OCI-LY7 (cell line): ENCODE measurements at regions of chr3 and their contacts with region 1.

Region 1: DNA sequence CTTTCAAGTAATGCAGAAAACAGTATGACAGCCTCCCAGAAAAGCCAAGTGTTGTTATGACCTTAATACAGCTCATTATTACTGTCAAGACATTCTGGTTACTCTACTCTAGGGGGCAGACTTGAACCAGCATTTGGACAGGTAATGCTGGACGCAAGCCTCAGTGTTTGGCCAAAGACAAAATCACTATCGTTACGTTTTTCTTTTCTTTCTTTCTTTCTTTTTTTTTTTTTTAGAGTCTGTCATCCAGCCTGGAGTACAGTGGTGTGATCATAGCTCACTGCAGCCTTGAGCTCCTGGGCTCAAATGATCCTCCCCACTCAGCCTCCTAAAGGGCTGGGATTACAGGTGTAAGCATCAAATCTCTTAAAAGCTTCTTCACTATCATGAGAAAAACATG is 29.4 kb upstream of the TMEM45A start:
- DNase-seq: peak; percentile 49
- H3K4me3 ChIP-seq: no peak overlapping the region
- H3K27ac ChIP-seq: no peak overlapping the region
- H3K4me1 ChIP-seq: no peaks in the 10 kb centered on the region
- CTCF ChIP-seq: peak; percentile 80

Region 2: DNA sequence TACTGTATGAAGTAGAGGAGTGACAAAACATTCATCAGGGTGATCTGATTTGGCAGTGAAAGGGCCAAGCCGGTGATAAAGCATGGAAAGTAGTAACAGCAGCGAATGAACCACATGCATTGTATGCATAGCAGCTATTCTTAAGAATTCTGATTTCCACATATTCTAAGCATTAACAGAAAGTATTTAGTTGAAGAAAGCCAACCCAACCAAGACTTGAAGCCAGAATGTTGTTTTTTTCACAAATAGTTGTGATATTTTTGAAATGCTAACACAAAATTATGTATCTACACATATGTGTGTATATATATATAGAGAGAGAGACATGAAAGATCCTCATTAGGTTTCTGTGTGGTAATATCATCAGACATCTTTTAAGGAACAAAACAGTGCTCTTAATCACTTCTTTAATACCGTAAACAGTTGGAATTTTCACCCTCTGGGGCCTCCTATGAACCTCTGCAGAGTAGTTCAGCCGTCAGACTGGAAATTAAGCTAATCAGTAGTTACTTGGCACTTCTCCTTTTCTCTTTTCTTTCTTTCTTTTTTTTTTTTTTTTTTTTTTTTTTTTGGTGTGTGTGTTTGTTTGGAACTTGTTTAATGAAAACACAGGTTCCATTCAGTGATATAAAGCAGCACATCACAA is 505.7 kb before region 1 on chr3:
- CTCF ChIA-PET with region 1: no interaction called
- POLR2A ChIA-PET with region 1: interaction called, 10 read pairs
- intact Hi-C with region 1: no loop called
- DNase-seq: no peak
- H3K4me3 ChIP-seq: no peak overlapping the region
- H3K27ac ChIP-seq: no peak overlapping the region
- H3K4me1 ChIP-seq: no peaks in the 10 kb centered on the region
- CTCF ChIP-seq: no peak

Region 3: DNA sequence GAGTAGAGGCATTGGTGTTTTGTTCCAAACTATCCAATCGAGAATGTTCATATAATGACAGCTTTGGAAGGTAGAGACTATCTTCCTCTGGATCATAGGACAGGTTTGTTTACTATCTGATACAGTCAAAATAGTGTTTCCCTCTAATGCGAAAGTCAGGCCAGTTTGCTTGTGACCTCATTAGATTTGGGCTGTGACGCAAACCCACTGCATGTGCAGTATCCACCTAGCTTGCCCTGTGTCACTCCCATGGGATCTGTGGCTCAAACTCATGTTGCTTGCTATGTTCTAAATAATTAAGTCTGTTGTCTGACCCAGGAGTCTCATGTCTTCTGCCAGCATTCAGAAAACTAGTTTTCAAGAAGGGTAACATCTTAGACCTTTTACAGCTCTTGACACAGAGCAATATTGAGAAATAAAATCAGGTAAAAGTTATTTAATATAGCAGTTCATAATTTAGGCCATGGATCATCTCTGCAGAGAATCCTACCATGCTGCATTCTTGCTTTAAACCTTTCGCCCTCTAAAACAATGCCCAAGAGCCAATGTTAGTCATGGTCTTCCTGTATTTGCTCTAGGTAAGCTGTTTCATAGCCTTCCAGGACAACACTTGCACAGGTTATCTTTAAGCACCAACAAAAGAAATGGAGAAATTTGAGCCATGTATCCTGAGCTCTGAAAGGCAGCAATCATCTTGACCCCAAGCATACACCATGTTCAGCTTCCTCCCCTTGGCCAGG is 102.1 kb before region 1 on chr3:
- CTCF ChIA-PET with region 1: no interaction called
- POLR2A ChIA-PET with region 1: no interaction called
- intact Hi-C with region 1: no loop called
- DNase-seq: no peak
- H3K4me3 ChIP-seq: no peak overlapping the region
- H3K27ac ChIP-seq: no peak overlapping the region
- H3K4me1 ChIP-seq: no peaks in the 10 kb centered on the region
- CTCF ChIP-seq: no peak

Region 4: GRCh38 chr3:100506355-100506754 is 43.4 kb after region 1 on chr3:
- CTCF ChIA-PET with region 1: no interaction called
- POLR2A ChIA-PET with region 1: no interaction called
- intact Hi-C with region 1: no loop called
- DNase-seq: no peak
- H3K4me3 ChIP-seq: no peak overlapping the region
- H3K27ac ChIP-seq: no peak overlapping the region
- H3K4me1 ChIP-seq: no peaks in the 10 kb centered on the region
- CTCF ChIP-seq: no peak

Region 5: DNA sequence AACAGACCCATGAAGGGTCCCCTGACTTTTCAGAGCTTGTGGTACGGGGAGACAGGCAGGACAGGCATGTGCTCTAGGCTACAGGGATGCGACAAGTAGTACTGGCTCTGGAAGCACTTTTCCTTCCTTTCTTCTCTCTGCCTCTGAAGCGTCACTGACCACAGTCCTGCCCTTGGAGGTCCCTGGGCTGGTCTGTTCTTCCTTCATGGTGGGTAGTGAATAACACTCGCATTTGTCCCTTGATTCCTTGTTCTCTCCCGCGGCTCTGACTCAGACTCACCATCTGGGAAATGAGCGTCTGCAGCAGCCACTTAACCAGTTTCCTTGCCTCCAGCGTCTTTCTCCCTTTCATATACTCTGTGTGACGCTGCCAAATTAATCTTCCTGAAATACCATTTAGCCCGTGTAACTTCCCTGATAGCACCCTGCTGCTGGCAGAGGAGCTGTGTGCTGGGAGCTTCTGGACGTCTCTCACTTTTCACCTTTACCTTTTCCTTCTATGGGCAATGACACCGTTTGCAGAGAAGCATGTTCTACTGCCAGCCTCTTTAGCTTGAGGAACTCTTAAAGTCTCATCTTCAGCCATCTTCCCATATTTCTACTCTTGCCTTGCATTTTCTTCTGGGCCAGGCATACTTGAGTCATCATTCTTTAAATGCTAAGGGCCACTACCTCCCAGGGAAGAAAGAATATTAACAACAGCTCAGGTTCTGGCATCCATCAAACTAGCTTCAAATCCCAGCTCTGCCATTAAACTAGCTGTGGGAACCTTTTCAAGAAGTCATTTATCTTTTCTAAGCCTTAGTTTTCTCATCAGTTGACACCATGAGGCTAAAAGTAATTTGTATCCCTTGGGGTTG is 63.0 kb after region 1 on chr3:
- CTCF ChIA-PET with region 1: no interaction called
- POLR2A ChIA-PET with region 1: no interaction called
- intact Hi-C with region 1: no loop called
- DNase-seq: no peak
- H3K4me3 ChIP-seq: no peak overlapping the region
- H3K27ac ChIP-seq: no peak overlapping the region
- H3K4me1 ChIP-seq: no peaks in the 10 kb centered on the region
- CTCF ChIP-seq: no peak

Region 6: DNA sequence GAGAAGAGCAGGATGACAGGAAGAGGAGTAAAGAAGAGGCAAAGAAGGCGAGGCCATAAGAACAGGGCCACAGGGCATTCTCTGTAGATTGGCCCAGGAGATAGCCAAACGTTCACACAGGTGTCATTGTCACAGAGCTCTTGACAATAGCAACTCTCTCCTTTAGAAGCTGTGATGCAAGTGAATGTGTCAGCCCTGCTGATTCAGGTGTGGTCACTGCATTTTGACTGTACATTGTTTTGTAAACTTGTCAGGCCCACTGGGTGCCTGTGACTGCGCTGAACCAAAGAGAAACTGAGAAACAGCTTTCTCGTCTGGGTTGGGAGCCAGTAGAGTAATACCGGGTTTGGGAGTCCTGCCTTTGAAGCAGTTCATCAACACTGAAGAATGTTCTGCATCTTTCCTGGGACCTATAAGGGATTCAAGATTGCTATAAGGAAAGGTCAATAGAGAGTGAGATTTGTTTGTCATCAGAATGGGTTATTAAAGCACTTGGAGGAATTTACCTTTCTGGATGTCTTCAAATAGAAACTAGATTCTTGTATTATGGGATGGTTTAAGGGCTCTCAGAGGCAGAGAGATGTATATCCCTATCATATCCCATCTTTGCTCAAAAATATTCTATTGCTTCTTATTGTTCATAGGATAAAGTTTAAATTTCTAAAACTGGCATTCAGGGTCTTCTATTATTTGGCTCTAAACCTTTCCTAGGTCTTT is 74.8 kb after region 1 on chr3:
- CTCF ChIA-PET with region 1: no interaction called
- POLR2A ChIA-PET with region 1: no interaction called
- intact Hi-C with region 1: no loop called
- DNase-seq: no peak
- H3K4me3 ChIP-seq: no peak overlapping the region
- H3K27ac ChIP-seq: no peak overlapping the region
- H3K4me1 ChIP-seq: no peaks in the 10 kb centered on the region
- CTCF ChIP-seq: no peak

Region 7: GRCh38 chr3:100796556-100796955 is 333.6 kb after region 1 on chr3:
- CTCF ChIA-PET with region 1: no interaction called
- POLR2A ChIA-PET with region 1: interaction called, 3 read pairs
- intact Hi-C with region 1: loop called (anchors 10 kb)
- DNase-seq: peak; percentile 8
- H3K4me3 ChIP-seq: no peak overlapping the region
- H3K27ac ChIP-seq: no peak overlapping the region
- H3K4me1 ChIP-seq: no peaks in the 10 kb centered on the region
- CTCF ChIP-seq: peak; percentile 70